ENCODE measurements at regions of chr7 and their contacts with region 1.

Region 1: GRCh38 chr7:76179686-76180085 is 22.0 kb upstream of the SRRM3 start:
- DNase-seq: no peak
- H3K4me3 ChIP-seq: no peak overlapping the region
- H3K27ac ChIP-seq: no peak overlapping the region
- H3K4me1 ChIP-seq: no peaks in the 10 kb centered on the region
- H3K27me3 ChIP-seq: no peaks in the 10 kb centered on the region
- CTCF ChIP-seq: no peak
- POLR2A ChIP-seq: no peak

Region 2: GRCh38 chr7:76031964-76032363 is 147.7 kb before region 1 on chr7:
- intact Hi-C with region 1: no loop called
- DNase-seq: no peak
- H3K4me3 ChIP-seq: no peak overlapping the region
- H3K27ac ChIP-seq: no peak overlapping the region
- H3K4me1 ChIP-seq: no peaks in the 10 kb centered on the region
- H3K27me3 ChIP-seq: no peaks in the 10 kb centered on the region
- CTCF ChIP-seq: no peak
- POLR2A ChIP-seq: no peak

Region 3: GRCh38 chr7:76122516-76123239 is 57.0 kb before region 1 on chr7:
- intact Hi-C with region 1: no loop called
- DNase-seq: no peak
- H3K4me3 ChIP-seq: no peak overlapping the region
- H3K27ac ChIP-seq: no peak overlapping the region
- H3K4me1 ChIP-seq: no peaks in the 10 kb centered on the region
- H3K27me3 ChIP-seq: no peaks in the 10 kb centered on the region
- CTCF ChIP-seq: no peak
- POLR2A ChIP-seq: no peak

Region 4: GRCh38 chr7:76244781-76245391 is 65.2 kb after region 1 on chr7:
- intact Hi-C with region 1: no loop called
- DNase-seq: no peak
- H3K4me3 ChIP-seq: no peak overlapping the region
- H3K27ac ChIP-seq: no peak overlapping the region
- H3K4me1 ChIP-seq: peaks cover 3% of the 10 kb centered on the region
- H3K27me3 ChIP-seq: no peaks in the 10 kb centered on the region
- CTCF ChIP-seq: no peak
- POLR2A ChIP-seq: no peak

Region 5: GRCh38 chr7:76262683-76263402 is 83.2 kb after region 1 on chr7:
- intact Hi-C with region 1: loop called (anchors 5 kb)
- DNase-seq: peak; percentile 51
- H3K4me3 ChIP-seq: no peak overlapping the region
- H3K27ac ChIP-seq: no peak overlapping the region
- H3K4me1 ChIP-seq: peaks cover 7% of the 10 kb centered on the region
- H3K27me3 ChIP-seq: no peaks in the 10 kb centered on the region
- CTCF ChIP-seq: peak; percentile 27 to 65 (median 62)
- POLR2A ChIP-seq: no peak

Region 6: DNA sequence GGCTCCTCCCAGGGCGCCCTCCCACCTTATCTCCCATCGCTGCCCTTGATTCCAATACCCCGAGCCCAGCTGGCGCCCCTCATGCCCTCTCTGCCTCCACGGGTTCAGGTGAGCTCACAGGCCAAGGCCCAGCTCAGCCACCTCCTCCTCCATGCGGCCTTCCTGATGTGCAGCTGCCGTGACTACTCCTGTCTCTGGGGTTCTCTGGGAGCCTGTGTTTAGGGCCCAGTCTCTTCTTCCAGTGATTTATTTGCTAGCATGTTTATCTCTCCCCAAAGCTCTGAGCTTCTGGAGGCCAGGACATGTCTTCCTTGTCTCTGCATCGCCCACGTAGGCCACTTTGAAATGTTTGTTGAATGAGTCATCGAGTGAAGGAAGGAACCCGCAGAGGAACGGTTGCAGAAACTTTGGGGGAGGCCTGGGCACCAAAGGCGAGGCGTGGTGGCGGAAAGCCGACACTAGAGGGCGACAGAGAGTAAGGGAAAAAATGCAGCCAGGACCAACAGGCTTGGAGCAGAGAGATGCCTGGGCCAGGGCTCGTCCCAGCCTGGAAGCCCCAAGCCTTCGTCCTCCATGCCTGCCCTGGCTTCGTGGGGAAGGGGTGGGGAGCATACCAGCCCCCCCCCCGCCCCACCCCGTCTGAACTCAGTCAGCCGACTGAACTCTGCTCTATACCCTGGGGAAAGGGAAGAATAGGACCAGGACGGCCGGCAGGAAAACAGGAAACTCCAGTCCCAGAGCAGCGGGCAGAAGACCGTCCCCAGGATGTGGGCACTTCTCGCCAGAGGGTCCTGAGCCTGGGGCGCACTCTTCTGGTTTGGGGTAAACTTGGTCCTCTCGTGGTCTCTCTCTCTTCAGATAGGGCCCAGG is 111.9 kb after region 1 on chr7:
- intact Hi-C with region 1: loop called (anchors 1 kb)
- DNase-seq: peak; percentile 92
- H3K4me3 ChIP-seq: peak overlapping the region in 1 of 2 donors; percentile 17
- H3K27ac ChIP-seq: peak overlapping the region; percentile 98
- H3K4me1 ChIP-seq: peaks cover 24% of the 10 kb centered on the region
- H3K27me3 ChIP-seq: no peaks in the 10 kb centered on the region
- CTCF ChIP-seq: peak; percentile 98 to 100 (median 99)
- POLR2A ChIP-seq: peak; percentile 6

Region 7: GRCh38 chr7:76314042-76314721 is 134.5 kb after region 1 on chr7:
- intact Hi-C with region 1: loop called (anchors 1 kb)
- DNase-seq: peak; percentile 95
- H3K4me3 ChIP-seq: no peak overlapping the region
- H3K27ac ChIP-seq: peak overlapping the region in 1 of 2 donors; percentile 35
- H3K4me1 ChIP-seq: peaks cover 5% of the 10 kb centered on the region
- H3K27me3 ChIP-seq: no peaks in the 10 kb centered on the region
- CTCF ChIP-seq: peak; percentile 100
- POLR2A ChIP-seq: no peak

Region 8: GRCh38 chr7:76359111-76359978 is 179.7 kb after region 1 on chr7:
- intact Hi-C with region 1: no loop called
- DNase-seq: peak; percentile 97
- H3K4me3 ChIP-seq: peak overlapping the region; percentile 96 to 98
- H3K27ac ChIP-seq: peak overlapping the region; percentile 99
- H3K4me1 ChIP-seq: peaks cover 7% of the 10 kb centered on the region
- H3K27me3 ChIP-seq: no peaks in the 10 kb centered on the region
- CTCF ChIP-seq: peak; percentile 59 to 95 (median 84)
- POLR2A ChIP-seq: peak; percentile 71

Measured in prostate gland (tissue), 2 donors.